Psoas muscle (tissue), 8 donors: ENCODE measurements at regions of chr1 and their contacts with region 1.

Region 1: DNA sequence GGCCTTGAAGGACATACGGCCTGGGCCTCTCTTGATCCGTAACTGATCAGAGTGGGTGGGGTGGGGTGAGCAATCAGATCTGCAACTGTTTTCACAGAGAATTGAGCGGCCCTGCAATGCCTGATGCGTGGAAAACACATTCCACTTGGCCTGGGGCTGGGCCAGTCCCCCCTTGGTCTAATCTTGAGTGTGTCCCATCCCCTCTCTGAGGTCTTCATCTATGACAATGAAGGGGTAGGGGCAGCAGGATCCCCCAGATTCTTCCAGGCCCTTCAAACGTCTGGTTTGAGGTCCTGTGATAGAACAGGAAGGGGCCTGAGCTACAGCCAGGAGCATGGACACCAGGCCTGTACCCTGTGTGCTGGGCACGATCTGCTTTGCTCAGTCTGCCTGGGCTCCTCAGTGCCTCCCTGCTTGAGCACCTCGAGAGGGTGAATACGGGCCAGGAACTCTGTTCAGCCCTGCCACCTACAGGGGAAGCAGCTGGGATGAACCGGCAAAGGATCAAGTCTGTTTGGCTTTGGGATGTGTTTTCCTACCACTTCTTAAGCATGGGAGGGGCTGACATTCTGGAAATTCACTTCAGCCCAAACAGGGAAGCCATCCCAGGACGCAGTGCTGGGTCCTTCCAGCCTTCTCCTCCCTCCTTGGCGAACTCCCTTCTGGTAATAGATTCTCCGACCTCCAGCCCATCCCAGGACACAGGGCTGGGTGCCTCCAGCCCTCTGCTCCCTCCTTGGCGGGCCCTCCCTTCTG is 56.0 kb upstream of the SELENON start:
- DNase-seq: peak; percentile 71 to 83
- ATAC-seq: peak; percentile 83 to 87 (median 86)
- H3K4me3 ChIP-seq: peak overlapping the region; percentile 24
- H3K27ac ChIP-seq: peak overlapping the region; percentile 93
- H3K4me1 ChIP-seq: peaks cover 22% of the 10 kb centered on the region
- H3K27me3 ChIP-seq: no peaks in the 10 kb centered on the region
- CTCF ChIP-seq: peak; percentile 50

Region 2: GRCh38 chr1:25369241-25369640 is 374.8 kb before region 1 on chr1:
- intact Hi-C with region 1: no loop called
- DNase-seq: no peak
- ATAC-seq: no peak
- H3K4me3 ChIP-seq: no peak overlapping the region
- H3K27ac ChIP-seq: no peak overlapping the region
- H3K4me1 ChIP-seq: no peaks in the 10 kb centered on the region
- H3K27me3 ChIP-seq: no peaks in the 10 kb centered on the region
- CTCF ChIP-seq: no peak

Region 3: DNA sequence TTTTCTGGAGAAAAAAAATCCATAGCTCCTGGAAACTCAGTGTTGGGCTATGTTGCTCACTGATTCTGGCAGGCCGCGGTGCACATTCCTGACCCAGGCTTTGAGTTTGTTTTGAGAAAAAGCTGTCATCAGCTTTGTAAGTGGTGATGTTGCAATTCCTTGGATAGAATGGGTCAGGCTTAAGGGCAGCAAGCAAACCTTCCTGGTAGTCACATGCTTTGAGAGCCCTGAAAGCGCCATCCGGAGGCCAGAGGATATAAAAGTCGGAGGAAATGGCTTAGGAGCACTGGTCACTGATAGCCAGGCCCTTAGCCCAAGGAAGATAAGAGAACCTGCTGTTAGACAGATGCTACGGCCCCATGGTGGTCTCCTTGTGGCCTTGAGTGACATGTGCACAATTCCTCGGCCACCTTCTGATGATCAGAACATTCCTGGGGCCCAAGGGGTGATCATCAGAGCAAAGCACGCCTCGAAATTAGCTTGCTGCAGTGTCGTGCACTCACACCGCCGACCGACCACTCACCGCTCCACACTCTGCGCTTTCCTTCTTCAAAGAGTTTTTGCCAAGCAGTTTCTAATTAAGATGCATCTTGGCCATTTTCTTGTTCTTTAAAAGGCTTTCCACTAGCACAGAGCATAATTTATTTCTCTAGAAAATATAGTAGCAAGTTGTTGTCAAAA is 48.8 kb before region 1 on chr1:
- intact Hi-C with region 1: loop called in 1 of 2 experiments (anchors 5 kb)
- DNase-seq: peak; percentile 83 to 90
- ATAC-seq: peak; percentile 75 to 81 (median 80)
- H3K4me3 ChIP-seq: no peak overlapping the region
- H3K27ac ChIP-seq: peak overlapping the region; percentile 80
- H3K4me1 ChIP-seq: peaks cover 50% of the 10 kb centered on the region
- H3K27me3 ChIP-seq: no peaks in the 10 kb centered on the region
- CTCF ChIP-seq: peak; percentile 42

Region 4: DNA sequence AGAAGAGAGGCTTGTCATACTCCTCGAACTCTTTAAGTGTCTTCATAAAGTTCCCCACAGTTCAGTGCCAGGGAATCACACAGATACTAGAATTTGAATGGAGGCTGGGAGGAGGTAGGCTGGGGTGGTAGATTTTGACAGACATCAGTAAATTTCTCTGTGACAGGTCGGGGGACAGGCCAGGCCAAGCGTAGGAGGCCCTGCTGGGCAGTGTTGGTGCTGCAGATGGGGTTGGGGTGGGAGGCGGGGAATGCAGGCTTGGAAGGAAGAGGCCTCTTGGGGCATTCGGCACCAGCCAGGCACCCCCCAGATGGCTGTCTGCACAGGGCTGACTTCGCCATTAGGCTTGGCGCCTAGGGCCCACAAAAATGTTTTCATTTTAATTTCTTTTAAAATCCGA is 43.4 kb before region 1 on chr1:
- intact Hi-C with region 1: loop called (anchors 1 to 5 kb)
- DNase-seq: no peak
- ATAC-seq: peak in 1 of 4 donors; percentile 6
- H3K4me3 ChIP-seq: no peak overlapping the region
- H3K27ac ChIP-seq: peak overlapping the region; percentile 91
- H3K4me1 ChIP-seq: peaks cover 49% of the 10 kb centered on the region
- H3K27me3 ChIP-seq: no peaks in the 10 kb centered on the region
- CTCF ChIP-seq: no peak

Region 5: DNA sequence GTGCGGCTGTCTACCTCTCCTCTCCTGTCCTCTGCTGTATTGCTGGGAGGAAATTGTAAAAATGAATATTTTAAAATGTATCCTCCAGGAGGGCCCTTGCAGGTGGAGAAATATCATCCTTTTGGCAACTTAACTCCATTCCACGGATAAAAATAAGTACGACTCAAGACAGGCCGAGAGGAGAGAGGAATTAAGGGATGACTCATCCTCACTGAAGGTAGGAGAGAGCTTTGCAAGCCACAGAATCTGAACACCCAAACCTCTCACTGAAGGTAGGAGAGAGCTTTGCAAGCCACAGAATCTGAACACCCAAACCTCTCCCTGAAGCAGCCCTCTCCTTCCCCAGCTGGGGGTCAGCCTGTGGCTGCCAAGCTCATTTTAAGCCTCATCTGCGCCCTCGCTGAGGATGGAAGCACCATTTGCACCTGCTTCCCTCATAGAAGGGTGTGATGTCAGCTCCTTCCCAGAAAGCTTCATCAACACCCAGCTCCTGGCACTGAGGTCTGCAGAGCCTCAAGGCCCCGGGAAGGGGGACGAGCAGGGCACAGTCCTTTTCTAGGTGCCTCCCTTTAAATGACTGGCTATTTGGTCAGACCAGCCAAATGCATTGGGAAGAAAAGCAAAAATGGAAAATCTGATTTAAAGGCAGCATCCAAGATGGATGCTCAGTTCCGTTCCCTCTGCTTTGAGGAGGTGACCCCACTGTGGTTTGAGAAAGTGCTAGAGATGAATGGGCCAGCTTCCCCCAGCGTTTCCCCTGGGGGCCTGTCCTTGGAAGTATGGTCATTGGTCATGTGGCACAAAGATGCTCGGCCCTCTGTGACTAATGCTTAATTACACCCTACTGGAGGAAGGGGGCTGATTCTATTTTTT is 43.1 kb after region 1 on chr1:
- intact Hi-C with region 1: no loop called
- DNase-seq: no peak
- ATAC-seq: peak; percentile 59 to 81 (median 72)
- H3K4me3 ChIP-seq: no peak overlapping the region
- H3K27ac ChIP-seq: peak overlapping the region; percentile 71
- H3K4me1 ChIP-seq: peaks cover 45% of the 10 kb centered on the region
- H3K27me3 ChIP-seq: no peaks in the 10 kb centered on the region
- CTCF ChIP-seq: no peak